Endothelial cell of umbilical vein (primary cell): ENCODE measurements at regions of chr14 and their contacts with region 1.

Region 1: DNA sequence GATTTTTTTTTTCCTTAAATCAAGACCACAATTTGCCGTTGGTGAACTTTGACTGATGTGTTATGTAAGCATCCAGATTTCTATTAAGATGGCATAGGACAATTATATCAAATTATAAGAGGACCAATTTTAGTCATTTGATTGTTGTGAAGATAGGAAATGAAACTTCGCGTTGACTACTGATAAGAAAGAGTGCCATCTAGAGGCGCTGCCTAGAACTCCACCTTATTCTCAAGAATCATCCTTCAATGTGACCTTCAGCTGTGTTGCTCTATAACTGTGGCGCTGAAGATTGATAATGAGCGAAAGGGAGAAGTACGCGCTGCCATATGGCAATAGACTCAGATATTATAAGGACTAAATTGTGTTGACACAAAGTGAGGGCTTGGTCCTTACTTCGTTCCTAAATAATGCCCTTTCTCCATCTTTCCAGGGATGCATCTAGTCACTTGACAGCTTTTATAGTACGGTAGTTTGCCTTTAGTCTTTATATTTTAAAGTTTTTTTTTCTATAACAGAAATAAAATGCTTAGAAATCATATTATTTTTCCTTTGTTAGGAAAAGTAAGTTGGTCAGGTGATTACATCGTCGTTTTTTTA is 350.8 kb upstream of the STXBP6 start:
- DNase-seq: peak; percentile 63
- H3K4me3 ChIP-seq: no peak overlapping the region
- H3K27ac ChIP-seq: no peak overlapping the region
- H3K4me1 ChIP-seq: peaks cover 16% of the 10 kb centered on the region
- H3K27me3 ChIP-seq: no peaks in the 10 kb centered on the region
- CTCF ChIP-seq: peak; percentile 64 to 73
- POLR2A ChIP-seq: no peak

Region 2: DNA sequence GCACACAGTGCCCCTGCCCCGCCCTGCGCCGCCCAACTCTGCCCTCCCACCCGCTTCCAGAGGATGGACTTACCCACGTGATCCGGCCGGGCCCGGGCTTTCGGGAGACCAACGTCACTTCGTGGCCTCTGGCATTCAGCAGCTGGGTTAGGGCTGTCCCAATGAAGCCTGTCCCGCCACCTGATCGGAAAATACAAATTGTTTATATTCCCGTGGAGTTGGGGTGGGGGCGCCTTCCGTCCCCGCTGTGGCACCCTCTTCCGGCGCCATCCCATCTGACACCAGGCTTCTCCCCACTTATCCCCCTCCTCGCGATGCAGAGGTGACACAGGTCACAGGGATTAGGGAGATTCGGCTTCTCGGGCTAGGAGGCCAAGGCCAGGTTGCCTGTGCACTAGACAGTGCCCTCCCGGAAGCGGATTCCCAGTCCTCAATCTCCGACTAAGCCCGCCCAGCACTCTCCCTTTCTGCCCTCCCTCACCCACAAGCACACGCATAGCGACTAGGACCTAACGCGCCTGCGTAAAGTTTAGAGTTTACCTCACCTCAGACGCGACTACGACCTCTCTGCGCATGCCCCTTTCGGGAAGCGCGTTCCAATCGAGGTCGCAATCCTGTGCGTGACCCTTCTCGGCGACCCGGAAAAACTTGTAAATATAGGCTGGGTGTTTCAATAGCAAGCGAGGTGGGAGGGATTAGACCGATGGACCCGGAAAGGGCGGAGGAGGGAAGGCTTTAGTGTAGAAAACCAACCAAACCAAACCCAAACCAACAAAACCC is 958.2 kb before region 1 on chr14 and contains the start of gene SDR39U1:
- CTCF ChIA-PET with region 1: no interaction called
- POLR2A ChIA-PET with region 1: no interaction called
- dilution Hi-C with region 1: no loop called
- intact Hi-C with region 1: loop called (anchors 10 kb)
- DNase-seq: peak; percentile 99
- H3K4me3 ChIP-seq: peak within 1 kb of the TSS; percentile 74 to 88 (median 76)
- H3K27ac ChIP-seq: peak within 1 kb of the TSS; percentile 98
- H3K4me1 ChIP-seq: peaks cover 25% of the 10 kb centered on the region
- H3K27me3 ChIP-seq: no peaks in the 10 kb centered on the region
- CTCF ChIP-seq: no peak
- POLR2A ChIP-seq: peak; percentile 74
- total RNA-seq, gene SDR39U1: 38.6 and 40.2 TPM in 2 replicates

Region 3: GRCh38 chr14:24806061-24806678 is 594.5 kb before region 1 on chr14:
- CTCF ChIA-PET with region 1: interaction called, 61 read pairs
- POLR2A ChIA-PET with region 1: no interaction called
- dilution Hi-C with region 1: no loop called
- intact Hi-C with region 1: no loop called
- DNase-seq: peak; percentile 51
- H3K4me3 ChIP-seq: no peak overlapping the region
- H3K27ac ChIP-seq: no peak overlapping the region
- H3K4me1 ChIP-seq: no peaks in the 10 kb centered on the region
- H3K27me3 ChIP-seq: peaks cover 2 to 4% of the 10 kb centered on the region in 2 experiments
- CTCF ChIP-seq: peak; percentile 72 to 80
- POLR2A ChIP-seq: no peak

Region 4: GRCh38 chr14:25150934-25151790 is 249.5 kb before region 1 on chr14:
- CTCF ChIA-PET with region 1: interaction called, 9 read pairs
- POLR2A ChIA-PET with region 1: no interaction called
- dilution Hi-C with region 1: no loop called
- intact Hi-C with region 1: loop called (anchors 2 kb)
- DNase-seq: peak; percentile 43
- H3K4me3 ChIP-seq: no peak overlapping the region
- H3K27ac ChIP-seq: no peak overlapping the region
- H3K4me1 ChIP-seq: no peaks in the 10 kb centered on the region
- H3K27me3 ChIP-seq: no peaks in the 10 kb centered on the region
- CTCF ChIP-seq: peak; percentile 42 to 49
- POLR2A ChIP-seq: no peak

Region 5: GRCh38 chr14:25308244-25308643 is 92.5 kb before region 1 on chr14:
- CTCF ChIA-PET with region 1: interaction called, 18 read pairs
- POLR2A ChIA-PET with region 1: no interaction called
- dilution Hi-C with region 1: no loop called
- intact Hi-C with region 1: no loop called
- DNase-seq: no peak
- H3K4me3 ChIP-seq: no peak overlapping the region
- H3K27ac ChIP-seq: no peak overlapping the region
- H3K4me1 ChIP-seq: no peaks in the 10 kb centered on the region
- H3K27me3 ChIP-seq: no peaks in the 10 kb centered on the region
- CTCF ChIP-seq: peak in 1 of 2 donors; percentile 21
- POLR2A ChIP-seq: no peak

Region 6: DNA sequence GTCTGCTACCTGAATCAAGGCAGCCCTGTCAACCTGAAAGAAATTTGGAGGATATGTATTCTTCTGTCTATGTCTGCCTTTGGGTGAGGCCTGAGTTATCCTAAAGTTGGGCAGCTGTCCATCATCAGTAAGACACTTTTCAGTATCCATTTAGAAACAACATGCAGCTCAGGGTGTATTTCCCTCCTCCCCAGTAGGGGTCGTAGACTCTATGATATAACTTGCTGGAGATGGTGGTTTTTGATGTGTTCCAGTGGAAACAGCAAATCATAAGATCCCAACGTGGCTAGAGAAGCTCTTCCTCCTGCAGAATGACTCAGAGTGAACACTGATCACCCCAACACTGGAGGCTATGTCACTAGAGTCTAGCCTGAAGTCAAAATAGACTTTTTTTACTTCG is 19.2 kb before region 1 on chr14:
- CTCF ChIA-PET with region 1: interaction called, 413 read pairs
- POLR2A ChIA-PET with region 1: interaction called, 4 read pairs
- dilution Hi-C with region 1: no loop called
- intact Hi-C with region 1: loop called (anchors 1 kb)
- DNase-seq: peak; percentile 59
- H3K4me3 ChIP-seq: no peak overlapping the region
- H3K27ac ChIP-seq: no peak overlapping the region
- H3K4me1 ChIP-seq: no peaks in the 10 kb centered on the region
- H3K27me3 ChIP-seq: peaks cover 0 to 29% of the 10 kb centered on the region in 2 experiments
- CTCF ChIP-seq: peak; percentile 52 to 62
- POLR2A ChIP-seq: no peak